ENCODE measurements at regions of chr4 and their contacts with region 1.

Region 1: GRCh38 chr4:52983563-52984303 is 121.6 kb downstream of the RASL11B start:
- DNase-seq: no peak
- H3K4me3 ChIP-seq: no peak overlapping the region
- H3K27ac ChIP-seq: peak overlapping the region in 1 of 2 donors; percentile 59
- H3K4me1 ChIP-seq: peaks cover 0 to 6% of the 10 kb centered on the region in 2 donors
- H3K27me3 ChIP-seq: no peaks in the 10 kb centered on the region
- CTCF ChIP-seq: peak; percentile 46 to 72 (median 55)

Region 2: GRCh38 chr4:52234561-52235440 is 748.9 kb before region 1 on chr4:
- intact Hi-C with region 1: loop called (anchors 1 kb)
- DNase-seq: no peak
- H3K4me3 ChIP-seq: peak overlapping the region; percentile 31 to 37
- H3K27ac ChIP-seq: no peak overlapping the region
- H3K4me1 ChIP-seq: peaks cover 0 to 5% of the 10 kb centered on the region in 2 donors
- H3K27me3 ChIP-seq: no peaks in the 10 kb centered on the region
- CTCF ChIP-seq: peak; percentile 43 to 71 (median 50)

Region 3: DNA sequence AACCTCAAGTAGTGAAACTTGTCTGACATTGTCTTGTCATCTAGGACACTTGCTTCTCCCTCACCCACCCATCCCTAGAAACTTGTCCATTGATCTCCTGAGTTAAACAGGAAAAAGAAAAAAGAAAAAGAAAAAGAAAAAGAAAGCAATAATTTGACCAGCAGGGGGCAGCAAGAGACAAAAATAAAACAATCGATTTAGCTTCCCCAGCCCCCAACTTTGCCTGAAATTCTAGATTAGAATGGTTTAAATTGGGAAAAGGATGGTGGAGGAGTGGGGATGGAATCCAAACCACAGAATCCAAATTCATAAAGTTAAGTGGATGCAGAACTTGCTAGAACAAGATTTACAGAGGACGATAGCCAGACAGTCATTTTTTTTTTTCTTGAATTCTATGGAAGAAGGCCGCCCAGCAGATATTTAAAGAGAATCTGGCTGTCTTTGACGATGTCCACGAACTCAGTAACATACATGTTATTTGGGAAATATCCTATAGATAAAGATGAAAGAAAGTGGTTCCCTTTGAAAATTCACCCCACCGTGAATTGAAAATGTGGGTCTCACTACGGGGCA is 607.5 kb before region 1 on chr4:
- intact Hi-C with region 1: loop called (anchors 1 kb)
- DNase-seq: no peak
- H3K4me3 ChIP-seq: no peak overlapping the region
- H3K27ac ChIP-seq: no peak overlapping the region
- H3K4me1 ChIP-seq: no peaks in the 10 kb centered on the region
- H3K27me3 ChIP-seq: no peaks in the 10 kb centered on the region
- CTCF ChIP-seq: peak; percentile 37 to 70 (median 54)

Region 4: DNA sequence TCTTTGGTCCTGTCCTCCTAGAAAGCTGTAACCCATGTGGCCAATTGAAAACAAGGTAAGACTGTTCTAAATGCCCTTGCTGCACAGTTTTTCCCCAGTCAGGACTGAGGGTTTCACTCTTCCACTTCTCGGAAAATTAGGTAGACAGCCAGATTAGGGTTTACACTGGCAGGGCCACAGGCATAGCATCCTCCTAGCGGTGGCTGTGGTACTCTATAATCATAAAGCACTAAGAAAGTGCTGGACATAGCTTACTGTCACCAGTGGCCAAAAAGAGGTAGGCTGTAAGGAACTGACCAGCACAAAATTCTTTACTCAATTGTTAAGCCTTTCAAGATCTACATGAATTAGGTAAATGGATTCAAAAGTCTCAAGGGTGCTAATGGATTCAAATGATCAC is 313.0 kb before region 1 on chr4:
- intact Hi-C with region 1: no loop called
- DNase-seq: no peak
- H3K4me3 ChIP-seq: no peak overlapping the region
- H3K27ac ChIP-seq: no peak overlapping the region
- H3K4me1 ChIP-seq: no peaks in the 10 kb centered on the region
- H3K27me3 ChIP-seq: no peaks in the 10 kb centered on the region
- CTCF ChIP-seq: peak in 2 of 3 experiments; percentile 6 to 32

Region 5: GRCh38 chr4:52721968-52722815 is 261.5 kb before region 1 on chr4:
- intact Hi-C with region 1: loop called (anchors 5 kb)
- DNase-seq: peak; percentile 83 to 96
- H3K4me3 ChIP-seq: peak overlapping the region; percentile 86 to 93
- H3K27ac ChIP-seq: peak overlapping the region; percentile 84 to 87
- H3K4me1 ChIP-seq: no peaks in the 10 kb centered on the region
- H3K27me3 ChIP-seq: no peaks in the 10 kb centered on the region
- CTCF ChIP-seq: no peak

Region 6: GRCh38 chr4:52869196-52869595 is 114.5 kb before region 1 on chr4:
- intact Hi-C with region 1: loop called (anchors 5 kb)
- DNase-seq: peak; percentile 30 to 75
- H3K4me3 ChIP-seq: peak overlapping the region in 1 of 2 donors; percentile 45
- H3K27ac ChIP-seq: peak overlapping the region; percentile 67 to 79
- H3K4me1 ChIP-seq: peaks cover 0 to 30% of the 10 kb centered on the region in 2 donors
- H3K27me3 ChIP-seq: no peaks in the 10 kb centered on the region
- CTCF ChIP-seq: no peak

Region 7: DNA sequence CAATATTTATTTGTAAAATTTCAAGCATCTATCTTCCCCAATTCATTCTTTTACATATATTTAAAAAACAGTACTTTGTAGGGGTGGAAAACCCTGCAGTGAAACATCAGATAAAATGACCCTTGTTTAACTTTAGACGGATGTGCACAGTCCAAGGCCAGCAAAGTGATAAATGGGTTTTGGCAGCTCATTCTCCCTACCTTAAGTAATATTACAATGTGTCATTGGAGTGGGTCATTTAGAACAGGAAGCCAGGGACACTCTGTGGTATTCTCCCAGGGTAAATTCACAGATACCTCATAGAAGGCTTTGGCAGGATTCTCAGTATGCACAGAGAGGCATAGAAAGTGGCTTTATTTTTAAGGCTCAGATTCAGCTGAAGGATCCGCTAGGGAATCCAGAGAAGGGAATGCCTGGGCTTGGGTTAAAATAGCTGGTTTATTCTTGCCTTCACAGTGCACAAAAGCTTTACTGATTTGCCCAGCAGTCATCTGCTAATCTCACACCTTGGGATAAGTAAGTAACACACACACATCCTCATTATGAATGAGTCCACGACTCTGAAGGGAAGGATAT is 85.1 kb after region 1 on chr4:
- intact Hi-C with region 1: no loop called
- DNase-seq: no peak
- H3K4me3 ChIP-seq: no peak overlapping the region
- H3K27ac ChIP-seq: no peak overlapping the region
- H3K4me1 ChIP-seq: no peaks in the 10 kb centered on the region
- H3K27me3 ChIP-seq: no peaks in the 10 kb centered on the region
- CTCF ChIP-seq: no peak